ENCODE measurements at regions of chr16 and their contacts with region 1.

Region 1: DNA sequence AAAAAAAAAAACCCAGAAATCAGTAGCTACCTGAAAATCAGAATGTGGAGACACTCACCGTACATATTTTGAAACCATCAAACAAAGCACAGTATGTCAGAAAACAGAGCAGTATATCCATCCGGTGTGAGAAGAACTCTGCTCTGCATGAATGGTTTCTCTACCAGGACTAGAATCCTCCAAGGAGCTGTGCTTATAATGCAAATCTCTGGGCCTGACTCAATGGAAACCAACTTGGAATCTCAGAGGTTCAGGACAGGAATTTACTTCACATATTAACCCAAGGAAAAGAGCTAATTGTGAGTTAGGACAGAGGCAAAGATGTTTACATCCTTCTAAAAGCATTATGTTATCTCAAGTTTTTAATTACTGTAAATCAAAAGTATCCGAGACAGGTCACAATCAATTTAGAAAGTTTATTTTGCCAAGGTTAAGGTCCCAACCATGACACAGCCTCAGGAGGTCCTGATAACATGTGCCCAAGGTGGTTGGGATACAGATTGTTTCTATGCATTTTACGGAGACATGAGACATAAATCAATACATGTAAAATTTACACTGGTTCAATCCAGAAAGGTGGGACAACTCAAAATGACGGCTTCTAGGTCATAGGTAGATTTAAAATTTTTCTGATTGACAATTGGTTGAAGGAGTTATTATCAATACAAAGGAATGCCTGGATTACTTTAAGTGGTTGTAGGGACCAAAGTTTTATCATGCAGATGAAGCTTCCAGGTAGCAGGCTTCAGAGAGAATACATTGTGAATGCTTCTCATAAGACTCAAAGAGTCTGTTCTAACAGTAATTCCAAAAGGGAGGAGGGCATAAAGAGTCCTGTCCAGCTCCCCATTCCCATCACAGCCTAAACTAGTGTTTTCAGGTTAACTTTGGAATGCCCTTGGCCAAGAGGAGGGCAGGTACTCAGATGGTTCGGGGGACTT is 164.1 kb downstream of the CDH8 start:
- DNase-seq: no peak
- H3K4me3 ChIP-seq: no peak overlapping the region
- H3K27ac ChIP-seq: no peak overlapping the region
- H3K4me1 ChIP-seq: no peaks in the 10 kb centered on the region
- H3K27me3 ChIP-seq: no peaks in the 10 kb centered on the region
- CTCF ChIP-seq: no peak
- EP300 ChIP-seq: no peak
- POLR2A ChIP-seq: no peak

Region 2: GRCh38 chr16:61887903-61888302 is 15.8 kb after region 1 on chr16:
- intact Hi-C with region 1: loop called (anchors 1 kb)
- DNase-seq: no peak
- H3K4me3 ChIP-seq: no peak overlapping the region
- H3K27ac ChIP-seq: no peak overlapping the region
- H3K4me1 ChIP-seq: no peaks in the 10 kb centered on the region
- H3K27me3 ChIP-seq: no peaks in the 10 kb centered on the region
- CTCF ChIP-seq: no peak
- EP300 ChIP-seq: no peak
- POLR2A ChIP-seq: no peak

Region 3: GRCh38 chr16:61909074-61909473 is 37.0 kb after region 1 on chr16:
- intact Hi-C with region 1: no loop called
- DNase-seq: no peak
- H3K4me3 ChIP-seq: no peak overlapping the region
- H3K27ac ChIP-seq: no peak overlapping the region
- H3K4me1 ChIP-seq: peaks cover 0 to 6% (median 2%) of the 10 kb centered on the region in 4 donors
- H3K27me3 ChIP-seq: no peaks in the 10 kb centered on the region
- CTCF ChIP-seq: no peak
- EP300 ChIP-seq: no peak
- POLR2A ChIP-seq: no peak